OCI-LY7 (cell line): ENCODE measurements at regions of chr5 and their contacts with region 1.

Region 1: DNA sequence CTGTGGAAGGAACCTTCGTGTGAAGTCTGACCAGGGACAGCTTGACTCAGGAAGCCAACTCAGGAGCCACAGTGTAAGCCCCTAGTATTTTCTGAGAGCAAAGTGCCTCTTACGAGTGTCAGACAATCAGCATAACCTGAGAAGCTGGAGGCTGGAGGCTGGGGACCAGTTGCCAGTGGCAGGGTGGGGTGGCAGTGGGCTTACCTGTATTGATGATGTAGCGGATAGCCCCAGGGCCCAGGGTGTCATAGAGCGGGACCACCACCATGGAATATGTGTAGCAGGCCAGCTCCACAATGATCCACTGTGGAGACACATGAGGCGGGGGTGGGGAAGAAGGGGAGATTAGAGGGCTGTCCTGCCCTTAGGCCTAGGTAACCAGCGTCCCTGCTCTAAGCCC is 22.9 kb downstream of the ACSL6 start:
- DNase-seq: no peak
- H3K4me3 ChIP-seq: no peak overlapping the region
- H3K27ac ChIP-seq: no peak overlapping the region
- H3K4me1 ChIP-seq: no peaks in the 10 kb centered on the region
- CTCF ChIP-seq: no peak

Region 2: GRCh38 chr5:131548176-131548575 is 440.4 kb before region 1 on chr5:
- CTCF ChIA-PET with region 1: no interaction called
- POLR2A ChIA-PET with region 1: no interaction called
- intact Hi-C with region 1: no loop called
- DNase-seq: peak; percentile 21
- H3K4me3 ChIP-seq: no peak overlapping the region
- H3K27ac ChIP-seq: no peak overlapping the region
- H3K4me1 ChIP-seq: peaks cover 9% of the 10 kb centered on the region
- CTCF ChIP-seq: no peak

Region 3: DNA sequence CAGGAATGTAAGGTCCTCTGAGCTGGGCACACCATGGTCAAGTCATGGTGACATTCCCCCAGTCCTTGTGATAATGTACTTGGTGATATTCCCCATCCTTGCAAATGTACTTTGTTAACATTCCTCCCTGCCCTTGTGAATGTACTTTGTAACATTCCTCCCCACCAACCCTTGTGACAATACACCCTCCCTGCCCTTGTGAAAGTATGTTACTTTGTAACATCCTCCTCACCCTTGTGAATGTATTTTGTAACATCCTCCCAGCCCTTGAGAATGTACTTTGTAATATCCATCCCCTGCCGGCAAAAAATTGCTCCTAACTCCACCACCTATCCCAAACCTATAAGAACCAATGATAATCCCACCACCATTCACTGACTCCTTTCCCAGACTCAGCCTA is 406.9 kb before region 1 on chr5:
- CTCF ChIA-PET with region 1: no interaction called
- POLR2A ChIA-PET with region 1: no interaction called
- intact Hi-C with region 1: no loop called
- DNase-seq: no peak
- H3K4me3 ChIP-seq: no peak overlapping the region
- H3K27ac ChIP-seq: no peak overlapping the region
- H3K4me1 ChIP-seq: no peaks in the 10 kb centered on the region
- CTCF ChIP-seq: no peak

Region 4: DNA sequence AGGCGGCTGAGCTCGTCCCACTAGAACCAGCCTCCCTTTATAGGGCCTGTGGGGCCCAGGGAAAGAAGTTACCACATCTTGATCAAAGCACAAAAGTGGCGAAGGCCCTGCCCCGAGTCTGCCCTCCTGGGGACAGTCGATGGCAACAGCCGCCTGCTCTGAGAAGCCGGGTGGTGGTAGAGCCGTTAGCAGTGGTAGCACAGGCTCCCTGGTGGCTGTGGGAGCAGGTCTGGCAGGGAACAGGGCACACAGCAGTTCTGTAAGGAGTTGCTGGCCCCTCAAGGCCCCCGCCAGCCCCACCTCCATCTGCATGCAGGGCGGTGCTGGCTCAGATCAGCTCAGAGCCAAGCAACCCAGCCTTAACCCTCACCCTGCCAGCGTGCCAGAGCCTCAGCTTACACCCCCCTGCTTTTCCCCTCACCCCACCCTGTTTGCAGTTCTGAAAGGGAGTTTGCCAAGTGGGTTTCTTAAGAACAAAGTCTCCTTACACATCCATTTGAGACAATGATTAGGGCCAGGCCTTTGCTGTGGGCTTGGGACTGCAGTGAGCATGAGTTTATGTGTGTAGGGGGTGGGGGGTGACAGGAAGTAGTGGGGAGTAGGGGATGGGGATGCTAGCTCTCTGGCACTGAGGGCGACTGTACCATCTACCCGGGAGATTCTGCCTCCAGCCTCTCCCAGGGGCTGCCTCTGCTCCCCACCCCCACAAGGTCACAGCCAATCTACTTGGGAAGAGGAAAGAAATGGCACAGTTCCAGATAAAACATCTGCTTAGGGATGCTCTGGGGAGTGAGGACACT is 11.0 kb after region 1 on chr5:
- CTCF ChIA-PET with region 1: interaction called, 18 read pairs
- POLR2A ChIA-PET with region 1: interaction called, 3 read pairs
- intact Hi-C with region 1: no loop called
- DNase-seq: no peak
- H3K4me3 ChIP-seq: no peak overlapping the region
- H3K27ac ChIP-seq: no peak overlapping the region
- H3K4me1 ChIP-seq: no peaks in the 10 kb centered on the region
- CTCF ChIP-seq: no peak